GM12878 (cell line): ENCODE measurements at regions of chrX and their contacts with region 1.

Region 1: GRCh38 chrX:110277609-110278008 is 40.3 kb downstream of the AMMECR1 start:
- DNase-seq: no peak
- ATAC-seq: no peak; the same call in 2 of the 3 replicates
- H3K4me3 ChIP-seq: no peak overlapping the region
- H3K27ac ChIP-seq: no peak overlapping the region
- H3K4me1 ChIP-seq: peaks cover 6% of the 10 kb centered on the region
- H3K27me3 ChIP-seq: no peaks in the 10 kb centered on the region
- CTCF ChIP-seq: no peak
- EP300 ChIP-seq: no peak
- POLR2A ChIP-seq: no peak
- RAD21 ChIP-seq: no peak

Region 2: DNA sequence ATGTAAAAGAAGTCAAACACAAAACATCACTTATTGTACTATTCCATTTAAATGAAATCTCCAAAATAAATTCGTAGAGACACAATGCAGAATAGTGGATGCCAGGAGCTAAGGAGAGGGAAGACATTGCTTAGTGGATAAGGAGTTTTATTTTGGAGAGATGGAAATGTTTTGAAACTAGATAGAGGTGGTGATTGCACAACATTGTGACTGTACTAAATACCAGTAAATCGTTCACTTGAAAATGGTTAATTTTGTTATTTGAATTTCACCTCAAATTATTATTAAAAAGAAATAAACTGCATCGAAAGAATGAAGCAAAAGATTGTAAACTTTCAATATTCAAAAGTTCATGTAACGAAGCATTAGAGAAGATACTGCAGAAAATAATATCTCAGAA is 534.9 kb before region 1 on chrX:
- CTCF ChIA-PET with region 1: no interaction called
- POLR2A ChIA-PET with region 1: no interaction called
- RAD21 ChIA-PET with region 1: no interaction called
- SMC1A ChIA-PET with region 1: no interaction called
- in situ Hi-C with region 1: no loop called
- intact Hi-C with region 1: no loop called
- DNase-seq: no peak
- ATAC-seq: no peak
- H3K4me3 ChIP-seq: no peak overlapping the region
- H3K27ac ChIP-seq: no peak overlapping the region
- H3K4me1 ChIP-seq: no peaks in the 10 kb centered on the region
- H3K27me3 ChIP-seq: no peaks in the 10 kb centered on the region
- CTCF ChIP-seq: no peak
- EP300 ChIP-seq: no peak
- POLR2A ChIP-seq: no peak
- RAD21 ChIP-seq: no peak

Region 3: DNA sequence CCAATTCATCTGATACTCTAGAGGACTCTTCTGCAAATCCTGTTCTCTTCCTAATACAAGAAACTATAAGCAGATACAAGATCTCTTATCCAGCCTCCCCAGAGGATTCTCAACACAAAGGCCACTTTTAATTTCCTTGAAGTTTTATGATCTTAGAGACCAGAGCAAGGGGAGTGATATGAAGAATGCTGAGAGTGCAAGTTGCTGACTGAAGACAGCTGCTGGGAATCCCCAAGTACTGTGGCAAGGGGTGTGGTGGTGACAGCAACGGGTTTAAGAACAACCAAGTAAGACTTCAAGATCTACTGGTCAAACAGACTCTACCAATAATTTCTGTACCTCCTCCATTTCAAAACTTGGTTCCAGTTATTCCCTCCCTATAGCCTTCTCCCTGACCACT is 33.3 kb after region 1 on chrX:
- CTCF ChIA-PET with region 1: interaction called, 4 read pairs
- POLR2A ChIA-PET with region 1: interaction called, 6 read pairs
- RAD21 ChIA-PET with region 1: interaction called, 8 read pairs
- SMC1A ChIA-PET with region 1: interaction called, 10 read pairs
- in situ Hi-C with region 1: no loop called
- intact Hi-C with region 1: no loop called
- DNase-seq: no peak
- ATAC-seq: peak; percentile 89
- H3K4me3 ChIP-seq: no peak overlapping the region
- H3K27ac ChIP-seq: no peak overlapping the region
- H3K4me1 ChIP-seq: no peaks in the 10 kb centered on the region
- H3K27me3 ChIP-seq: no peaks in the 10 kb centered on the region
- CTCF ChIP-seq: no peak
- EP300 ChIP-seq: no peak
- POLR2A ChIP-seq: no peak
- RAD21 ChIP-seq: no peak